ENCODE measurements at regions of chr5 and their contacts with region 1.

Region 1: DNA sequence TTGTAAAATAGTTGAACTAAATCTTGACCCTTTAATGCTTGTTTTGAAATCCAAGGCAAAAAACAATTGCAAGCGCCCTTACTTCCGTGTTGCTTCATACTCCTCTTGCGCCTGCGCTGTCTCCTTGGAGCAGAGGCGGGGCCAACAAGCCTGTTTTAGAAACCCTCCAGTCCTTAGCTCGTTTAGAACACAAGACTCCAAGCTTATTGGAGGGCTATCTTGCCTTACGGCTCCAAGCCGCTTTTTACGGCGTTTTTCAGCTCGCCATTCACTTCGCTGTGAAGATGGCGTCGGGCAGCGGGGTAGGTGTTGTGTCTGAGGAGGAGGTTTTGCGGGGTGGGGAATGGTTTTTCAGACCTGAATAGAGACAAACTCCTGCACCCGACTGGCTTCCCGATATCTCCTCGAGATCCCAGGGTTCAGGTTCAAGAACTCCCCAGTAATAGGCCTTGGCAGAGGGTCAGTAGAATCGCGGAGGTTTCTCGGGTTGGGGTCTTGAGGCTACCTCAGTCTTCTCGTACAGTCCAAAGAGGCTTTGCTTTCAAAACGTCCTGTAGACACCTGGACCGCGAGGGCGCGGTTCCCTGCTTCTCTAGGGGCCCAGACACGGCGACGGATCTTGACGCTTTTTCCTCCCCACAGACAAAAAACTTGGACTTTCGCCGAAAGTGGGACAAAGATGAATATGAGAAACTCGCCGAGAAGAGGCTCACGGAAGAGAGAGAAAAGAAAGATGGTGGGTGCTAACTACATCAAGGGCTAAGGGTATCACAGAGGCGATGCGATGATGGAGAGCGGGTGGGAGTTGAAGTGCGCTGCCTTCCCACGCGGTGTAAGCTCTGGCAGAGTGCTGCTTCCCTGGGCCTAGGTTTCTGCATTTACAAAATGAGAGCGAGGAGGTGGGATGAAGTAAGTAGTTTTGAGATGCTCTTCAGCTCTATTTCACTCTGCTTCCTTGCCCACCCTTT is at the start of gene ZMAT2:
- DNase-seq: peak; percentile 97
- H3K4me3 Mint-ChIP-seq: peak within 1 kb of the TSS; percentile 97
- H3K27ac Mint-ChIP-seq: peak within 1 kb of the TSS; percentile 90
- H3K4me1 Mint-ChIP-seq: peaks cover 28% of the 10 kb centered on the region
- H3K27me3 Mint-ChIP-seq: no peaks in the 10 kb centered on the region
- total RNA-seq, gene ZMAT2: 51.4 to 53.4 TPM

Region 2: GRCh38 chr5:140564196-140565023 is 136.1 kb before region 1 on chr5 and contains the starts of genes APBB3 and SLC35A4:
- CTCF ChIA-PET with region 1: no interaction called
- POLR2A ChIA-PET with region 1: no interaction called
- intact Hi-C with region 1: loop called (anchors 1 kb)
- DNase-seq: peak; percentile 98
- H3K4me3 Mint-ChIP-seq: peak within 1 kb of the TSS; percentile 91
- H3K27ac Mint-ChIP-seq: peak within 1 kb of the TSS; percentile 93
- H3K4me1 Mint-ChIP-seq: peaks cover 47% of the 10 kb centered on the region
- H3K27me3 Mint-ChIP-seq: no peaks in the 10 kb centered on the region
- total RNA-seq, gene APBB3: 16.3 to 16.8 TPM
- total RNA-seq, gene SLC35A4: 68.7 to 69.7 TPM

Region 3: DNA sequence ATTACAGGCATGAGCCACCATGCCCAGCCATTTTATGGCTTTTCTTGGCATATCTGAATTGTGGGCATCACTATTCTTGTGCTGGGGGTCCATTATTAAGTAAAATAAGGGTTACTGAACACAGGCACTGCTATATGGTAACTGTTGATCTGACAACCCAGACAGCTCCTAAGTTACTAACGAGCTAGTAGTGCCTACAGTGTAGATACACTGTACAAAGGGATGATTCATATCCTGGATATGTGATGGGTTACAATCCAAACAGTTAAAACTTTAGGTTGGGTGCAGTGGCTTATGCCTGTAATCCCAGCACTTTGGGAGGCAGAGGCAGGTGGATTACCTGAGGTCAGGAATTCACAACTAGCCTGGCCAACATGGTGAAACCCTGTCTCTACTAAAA is 71.8 kb before region 1 on chr5:
- CTCF ChIA-PET with region 1: no interaction called
- POLR2A ChIA-PET with region 1: no interaction called
- intact Hi-C with region 1: no loop called
- DNase-seq: no peak
- H3K4me3 Mint-ChIP-seq: no peak overlapping the region
- H3K27ac Mint-ChIP-seq: no peak overlapping the region
- H3K4me1 Mint-ChIP-seq: peaks cover 10% of the 10 kb centered on the region
- H3K27me3 Mint-ChIP-seq: peaks cover 2% of the 10 kb centered on the region

Region 4: DNA sequence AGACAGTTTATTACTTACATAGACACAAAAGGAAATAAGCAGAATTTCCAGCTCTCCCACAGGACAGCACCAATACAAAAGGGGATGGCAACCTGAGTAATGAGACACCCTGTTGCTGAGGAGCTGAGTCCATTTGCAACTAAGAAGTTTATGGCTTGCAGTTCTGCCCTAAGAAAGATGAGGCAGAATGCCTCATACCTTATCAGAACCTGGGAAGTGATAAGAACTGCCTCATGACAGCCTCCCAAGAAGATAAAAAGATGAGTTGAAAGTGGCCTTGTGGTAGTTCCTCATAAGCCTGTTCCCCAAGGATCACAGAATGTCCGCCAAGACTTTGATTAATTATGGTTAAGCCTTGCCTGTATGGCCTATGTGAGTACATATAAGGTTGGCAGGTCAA is 41.5 kb after region 1 on chr5:
- CTCF ChIA-PET with region 1: no interaction called
- POLR2A ChIA-PET with region 1: no interaction called
- intact Hi-C with region 1: no loop called
- DNase-seq: no peak
- H3K4me3 Mint-ChIP-seq: no peak overlapping the region
- H3K27ac Mint-ChIP-seq: no peak overlapping the region
- H3K4me1 Mint-ChIP-seq: no peaks in the 10 kb centered on the region
- H3K27me3 Mint-ChIP-seq: peaks cover 4% of the 10 kb centered on the region

Region 5: GRCh38 chr5:140821375-140822280 is 121.2 kb after region 1 on chr5 and contains the start of gene PCDHA5:
- CTCF ChIA-PET with region 1: no interaction called
- POLR2A ChIA-PET with region 1: no interaction called
- intact Hi-C with region 1: no loop called
- DNase-seq: peak; percentile 36
- H3K4me3 Mint-ChIP-seq: no peak within 1 kb of the TSS
- H3K27ac Mint-ChIP-seq: no peak within 1 kb of the TSS
- H3K4me1 Mint-ChIP-seq: no peaks in the 10 kb centered on the region
- H3K27me3 Mint-ChIP-seq: peaks cover 3% of the 10 kb centered on the region
- total RNA-seq, gene PCDHA5: not detected

Region 6: DNA sequence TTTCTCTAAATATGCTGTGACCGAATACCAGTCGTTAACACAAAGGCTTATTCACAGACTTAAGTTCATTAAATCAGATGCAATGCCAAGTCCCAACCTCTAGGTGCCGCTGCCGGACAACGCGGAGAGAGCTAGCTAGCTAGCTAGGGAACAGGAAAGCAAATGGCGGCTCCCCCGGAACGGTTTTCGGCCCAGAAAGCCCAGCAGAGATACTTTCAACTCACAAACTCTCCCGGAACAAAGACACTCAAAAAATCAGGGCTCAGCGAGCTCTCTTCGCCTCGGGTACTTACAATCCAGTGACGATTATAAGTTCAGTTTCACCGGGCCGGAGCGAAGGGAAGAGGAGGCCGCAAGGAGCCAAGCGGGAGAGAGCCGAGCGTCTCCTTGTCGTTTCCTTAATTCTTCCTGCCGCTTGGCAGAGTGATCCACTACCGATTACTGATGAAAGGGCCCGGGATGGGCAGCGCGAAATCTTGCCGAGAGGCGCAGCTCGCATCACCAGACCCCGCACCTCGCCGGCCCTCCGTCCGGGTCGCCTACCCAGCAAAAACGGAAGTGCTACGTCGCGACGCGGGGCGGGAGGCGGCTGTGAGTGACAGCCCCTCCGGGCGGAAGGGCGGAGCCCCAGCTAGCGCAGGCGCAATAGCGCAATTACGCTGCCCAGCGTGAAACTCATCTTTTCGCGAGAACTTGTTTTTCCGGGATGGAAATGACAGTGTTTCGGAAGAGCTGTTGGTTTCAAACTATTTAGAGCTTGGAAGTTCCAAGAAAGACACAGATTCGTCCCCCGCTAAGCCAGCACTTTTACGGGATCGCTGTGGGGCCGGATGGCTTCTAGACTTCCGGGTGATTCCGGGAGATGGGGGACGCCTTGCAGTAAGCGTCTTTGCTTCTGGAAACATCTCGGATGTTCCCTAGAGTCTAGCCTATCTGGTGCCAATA is 620.0 kb after region 1 on chr5 and contains the start of gene TAF7:
- CTCF ChIA-PET with region 1: no interaction called
- POLR2A ChIA-PET with region 1: no interaction called
- intact Hi-C with region 1: loop called (anchors 5 kb)
- DNase-seq: peak; percentile 95
- H3K4me3 Mint-ChIP-seq: peak within 1 kb of the TSS; percentile 98
- H3K27ac Mint-ChIP-seq: peak within 1 kb of the TSS; percentile 99
- H3K4me1 Mint-ChIP-seq: peaks cover 23% of the 10 kb centered on the region
- H3K27me3 Mint-ChIP-seq: no peaks in the 10 kb centered on the region
- total RNA-seq, gene TAF7: 54.6 to 55.5 TPM

Measured in activated CD4-positive, alpha-beta memory T cell treated with anti-CD3 and anti-CD28 coated beads for 36 hours (primary cell).